ENCODE measurements at regions of chr10 and their contacts with region 1.

Region 1: GRCh38 chr10:68208424-68209042 is 23.4 kb downstream of the ATOH7 start:
- DNase-seq: peak; percentile 85
- H3K4me3 ChIP-seq: no peak overlapping the region
- H3K27ac ChIP-seq: no peak overlapping the region
- H3K4me1 ChIP-seq: peaks cover 7% of the 10 kb centered on the region
- H3K27me3 ChIP-seq: no peaks in the 10 kb centered on the region
- CTCF ChIP-seq: peak; percentile 77

Region 2: DNA sequence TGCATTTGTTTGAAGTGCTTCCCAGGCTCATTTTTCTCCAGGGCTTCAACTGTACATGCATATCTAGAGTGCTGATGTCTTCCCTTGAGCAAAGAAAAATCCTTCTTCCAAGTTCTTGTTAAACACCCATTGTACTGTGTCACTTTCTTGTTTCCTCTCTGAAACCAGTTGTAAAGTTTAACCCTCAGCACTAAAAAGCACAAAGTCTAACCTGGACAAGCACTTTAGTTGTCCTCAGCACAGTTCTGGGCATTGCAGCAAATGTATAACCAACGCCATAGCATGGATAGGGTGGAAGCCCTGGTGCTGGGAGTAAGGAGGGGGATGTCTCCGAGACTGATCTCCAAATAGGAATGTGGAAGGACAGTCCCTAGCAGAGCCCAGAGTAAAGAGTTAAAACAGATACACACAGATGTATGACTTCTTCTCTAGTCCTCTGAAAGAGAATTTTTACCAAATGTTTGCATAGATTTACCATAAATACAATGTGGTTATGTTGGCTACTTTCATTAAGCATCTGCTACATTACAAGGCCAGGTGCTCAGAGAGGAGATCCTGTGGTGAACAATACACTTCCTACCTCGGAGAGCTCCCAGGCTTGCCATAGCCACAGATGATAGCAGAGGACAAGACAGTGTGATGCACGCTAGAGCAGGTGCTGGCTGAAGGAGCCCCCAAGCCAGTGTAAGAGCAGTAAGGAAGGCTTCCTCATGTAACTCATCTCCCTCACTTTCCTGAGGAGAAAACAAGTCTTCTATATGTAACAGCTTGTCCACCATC is 427.6 kb before region 1 on chr10:
- CTCF ChIA-PET with region 1: no interaction called
- POLR2A ChIA-PET with region 1: no interaction called
- intact Hi-C with region 1: no loop called
- DNase-seq: no peak
- H3K4me3 ChIP-seq: no peak overlapping the region
- H3K27ac ChIP-seq: no peak overlapping the region
- H3K4me1 ChIP-seq: peaks cover 4% of the 10 kb centered on the region
- H3K27me3 ChIP-seq: no peaks in the 10 kb centered on the region
- CTCF ChIP-seq: no peak

Region 3: GRCh38 chr10:67849331-67850011 is 359.1 kb before region 1 on chr10:
- CTCF ChIA-PET with region 1: no interaction called
- POLR2A ChIA-PET with region 1: no interaction called
- intact Hi-C with region 1: loop called (anchors 2 kb)
- DNase-seq: peak; percentile 97
- H3K4me3 ChIP-seq: peak overlapping the region; percentile 63
- H3K27ac ChIP-seq: peak overlapping the region; percentile 82
- H3K4me1 ChIP-seq: peaks cover 5% of the 10 kb centered on the region
- H3K27me3 ChIP-seq: no peaks in the 10 kb centered on the region
- CTCF ChIP-seq: no peak

Region 4: GRCh38 chr10:68082872-68083271 is 125.7 kb before region 1 on chr10:
- CTCF ChIA-PET with region 1: no interaction called
- POLR2A ChIA-PET with region 1: no interaction called
- intact Hi-C with region 1: loop called (anchors 2 kb)
- DNase-seq: peak; percentile 66
- H3K4me3 ChIP-seq: no peak overlapping the region
- H3K27ac ChIP-seq: peak overlapping the region; percentile 34
- H3K4me1 ChIP-seq: peaks cover 27% of the 10 kb centered on the region
- H3K27me3 ChIP-seq: no peaks in the 10 kb centered on the region
- CTCF ChIP-seq: peak; percentile 66

Region 5: DNA sequence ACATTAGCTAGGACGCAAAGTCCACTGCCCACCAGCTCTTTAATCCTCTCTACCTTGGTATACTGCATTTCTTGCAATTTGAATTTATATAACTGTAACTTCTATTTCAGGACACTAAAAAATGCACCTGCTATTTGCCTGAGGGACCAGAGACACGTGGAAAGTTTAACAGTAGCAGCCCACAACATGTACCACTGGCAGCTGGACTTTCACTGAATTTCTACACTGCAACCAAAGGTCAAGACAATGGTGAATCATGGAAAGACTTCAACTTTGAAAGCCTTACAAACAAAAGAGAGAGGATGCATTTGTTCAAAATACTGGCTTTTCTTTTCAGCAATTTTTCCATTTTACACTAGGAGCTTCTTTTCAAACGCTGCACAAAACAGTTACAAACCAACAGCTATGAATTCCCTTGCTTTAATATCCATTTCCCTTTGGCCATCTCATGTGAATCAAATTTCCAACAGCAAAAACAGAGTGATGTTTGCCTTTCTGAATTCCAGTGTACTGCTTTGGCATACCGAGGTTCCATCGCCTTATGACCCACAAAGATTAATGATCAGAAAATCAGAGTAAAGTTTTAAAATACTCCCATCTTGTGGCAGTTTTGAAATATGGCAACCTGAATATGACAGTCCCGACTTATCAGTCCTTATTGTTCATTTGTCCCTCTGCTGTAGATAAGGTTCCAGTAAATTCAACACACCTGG is 93.4 kb after region 1 on chr10:
- CTCF ChIA-PET with region 1: interaction called, 19 read pairs
- POLR2A ChIA-PET with region 1: interaction called, 3 read pairs
- intact Hi-C with region 1: loop called (anchors 1 kb)
- DNase-seq: peak; percentile 78
- H3K4me3 ChIP-seq: no peak overlapping the region
- H3K27ac ChIP-seq: no peak overlapping the region
- H3K4me1 ChIP-seq: peaks cover 5% of the 10 kb centered on the region
- H3K27me3 ChIP-seq: no peaks in the 10 kb centered on the region
- CTCF ChIP-seq: peak; percentile 69

Region 6: DNA sequence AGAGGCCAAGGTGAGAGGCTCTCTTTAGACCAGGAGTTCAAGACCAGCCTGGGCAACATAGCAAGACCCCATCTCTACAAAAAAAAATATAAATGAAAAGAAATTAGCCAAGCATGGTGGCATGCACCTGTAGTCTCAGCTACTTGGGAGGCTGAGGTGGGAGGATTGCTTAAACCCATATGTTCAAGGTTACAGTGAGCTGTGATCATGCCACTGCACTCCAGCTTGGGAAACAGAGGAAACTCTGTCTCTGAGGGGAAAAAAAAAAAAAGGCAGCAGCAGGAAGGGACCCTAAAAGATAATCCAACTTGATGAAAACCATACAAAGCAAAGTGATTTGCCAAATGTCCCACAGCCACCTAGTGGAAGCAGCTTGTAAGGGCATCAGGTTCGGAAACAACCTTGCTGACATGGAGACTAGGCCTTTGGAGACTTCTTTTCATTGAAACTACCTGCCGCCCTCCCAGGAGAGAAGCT is 139.8 kb after region 1 on chr10:
- CTCF ChIA-PET with region 1: interaction called, 7 read pairs
- POLR2A ChIA-PET with region 1: no interaction called
- intact Hi-C with region 1: loop called (anchors 5 kb)
- DNase-seq: peak; percentile 81
- H3K4me3 ChIP-seq: no peak overlapping the region
- H3K27ac ChIP-seq: no peak overlapping the region
- H3K4me1 ChIP-seq: no peaks in the 10 kb centered on the region
- H3K27me3 ChIP-seq: no peaks in the 10 kb centered on the region
- CTCF ChIP-seq: peak; percentile 83